ENCODE measurements at regions of chr16 and their contacts with region 1.

Region 1: DNA sequence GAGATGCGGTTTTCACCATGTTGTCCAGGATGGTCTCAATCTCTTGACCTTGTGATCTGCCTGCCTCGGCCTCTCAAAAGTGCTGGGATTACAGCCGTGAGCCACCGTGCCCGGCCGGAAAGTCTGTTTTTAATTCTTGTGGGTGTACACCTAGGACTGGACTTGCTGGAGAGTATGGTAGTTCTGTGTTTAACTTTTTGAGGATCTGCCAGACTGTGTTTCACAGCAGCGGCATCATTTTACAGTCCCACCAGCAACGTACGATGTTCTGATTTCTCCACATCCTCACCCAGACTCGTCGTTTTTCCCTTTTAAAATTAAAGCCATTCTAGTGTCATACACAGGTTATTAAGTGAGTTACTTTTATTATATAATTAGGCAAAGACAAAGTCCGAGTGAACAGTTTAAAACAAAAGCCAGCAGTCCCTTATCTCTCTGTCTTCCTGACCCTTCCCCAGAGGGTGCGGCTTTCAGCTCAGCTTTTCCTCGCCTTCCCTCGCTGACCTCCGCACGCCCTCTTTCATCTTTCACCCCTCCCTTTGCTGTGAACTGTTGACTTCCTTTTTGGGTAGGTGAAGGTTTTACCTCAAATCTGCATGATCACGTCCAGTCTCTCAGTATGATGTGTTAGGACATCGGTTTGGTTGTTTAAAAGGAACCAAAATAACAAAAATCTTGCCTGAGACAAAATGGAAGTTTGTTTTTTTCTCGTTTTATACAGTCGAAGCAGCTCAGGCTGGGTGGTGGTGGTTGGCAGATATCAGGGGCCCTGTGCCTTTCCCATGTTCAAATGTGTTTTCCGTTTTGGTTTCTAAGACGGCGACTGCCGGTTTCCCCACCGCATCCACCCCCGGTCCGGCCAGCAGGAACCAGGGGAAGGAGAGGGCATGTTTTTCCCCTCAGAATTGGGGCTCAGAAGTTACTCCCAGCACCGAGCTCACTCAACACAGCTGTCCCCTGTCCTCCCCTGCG is 18.0 kb downstream of the FAM234A start:
- DNase-seq: peak; percentile 61 to 86 (median 70)
- ATAC-seq: peak; percentile 92
- H3K4me3 ChIP-seq: no peak overlapping the region
- H3K27ac ChIP-seq: peak overlapping the region; percentile 85
- H3K4me1 ChIP-seq: peaks cover 9 to 38% of the 10 kb centered on the region in 2 experiments
- H3K27me3 ChIP-seq: no peaks in the 10 kb centered on the region
- CTCF ChIP-seq: no peak
- EP300 ChIP-seq: no peak; the same call in 1 of the 2 replicates
- POLR2A ChIP-seq: peak; percentile 41; the same call in 1 of the 2 replicates
- RAD21 ChIP-seq: no peak

Region 2: GRCh38 chr16:242281-242680 is 10.4 kb before region 1 on chr16:
- CTCF ChIA-PET with region 1: no interaction called
- POLR2A ChIA-PET with region 1: interaction called, 14 read pairs
- in situ Hi-C with region 1: no loop called
- intact Hi-C with region 1: no loop called
- DNase-seq: no peak
- ATAC-seq: no peak
- H3K4me3 ChIP-seq: no peak overlapping the region
- H3K27ac ChIP-seq: peak overlapping the region; percentile 58; the same call in 2 of the 3 replicates
- H3K4me1 ChIP-seq: peaks cover 22 to 31% of the 10 kb centered on the region in 2 experiments
- H3K27me3 ChIP-seq: no peaks in the 10 kb centered on the region
- CTCF ChIP-seq: no peak
- EP300 ChIP-seq: no peak
- POLR2A ChIP-seq: no peak
- RAD21 ChIP-seq: no peak

Measured in K562 (cell line).